ENCODE measurements at regions of chr1 and their contacts with region 1.

Region 1: GRCh38 chr1:202589190-202590030 is 120.8 kb downstream of the SYT2 start:
- DNase-seq: peak; percentile 45
- H3K4me3 ChIP-seq: no peak overlapping the region
- H3K27ac ChIP-seq: peak overlapping the region; percentile 82 to 95
- H3K4me1 ChIP-seq: peaks cover 33 to 60% of the 10 kb centered on the region in 2 experiments
- H3K27me3 ChIP-seq: no peaks in the 10 kb centered on the region
- CTCF ChIP-seq: peak; percentile 25
- EP300 ChIP-seq: peak; percentile 66 to 98; a peak in 3 of 4 replicates
- RAD21 ChIP-seq: no peak

Region 2: GRCh38 chr1:202571347-202572339 is 17.8 kb before region 1 on chr1:
- CTCF ChIA-PET with region 1: interaction called, 20 read pairs
- POLR2A ChIA-PET with region 1: interaction called, 5 read pairs
- DNase-seq: no peak
- H3K4me3 ChIP-seq: no peak overlapping the region
- H3K27ac ChIP-seq: peak overlapping the region in 1 of 2 experiments; percentile 36; a peak in 1 of 4 replicates
- H3K4me1 ChIP-seq: peaks cover 46 to 56% of the 10 kb centered on the region in 2 experiments
- H3K27me3 ChIP-seq: no peaks in the 10 kb centered on the region
- CTCF ChIP-seq: peak; percentile 93
- EP300 ChIP-seq: no peak
- RAD21 ChIP-seq: peak; percentile 87

Measured in SK-N-SH (cell line).